CD4-positive, alpha-beta memory T cell (primary cell): ENCODE measurements at regions of chr1 and their contacts with region 1.

Region 1: GRCh38 chr1:100443811-100444571 is 91.7 kb downstream of the CDC14A start:
- DNase-seq: peak; percentile 52 to 69 (median 61)
- H3K4me3 ChIP-seq: peak overlapping the region; percentile 8 to 26
- H3K4me3 Mint-ChIP-seq: peak overlapping the region; percentile 74 to 91 (median 80)
- H3K27ac ChIP-seq: peak overlapping the region; percentile 96
- H3K27ac Mint-ChIP-seq: peak overlapping the region; percentile 98 to 100 (median 99)
- H3K4me1 ChIP-seq: peaks cover 99% of the 10 kb centered on the region
- H3K4me1 Mint-ChIP-seq: peaks cover 65 to 93% (median 75%) of the 10 kb centered on the region in 4 donors
- H3K27me3 ChIP-seq: no peaks in the 10 kb centered on the region
- H3K27me3 Mint-ChIP-seq: no peaks in the 10 kb centered on the region

Region 2: GRCh38 chr1:100430325-100430813 is 13.6 kb before region 1 on chr1:
- CTCF ChIA-PET with region 1: interaction called, 22 read pairs
- POLR2A ChIA-PET with region 1: interaction called, 272 read pairs
- intact Hi-C with region 1: no loop called
- DNase-seq: no peak
- H3K4me3 ChIP-seq: no peak overlapping the region
- H3K4me3 Mint-ChIP-seq: peak overlapping the region in 3 of 8 donors; percentile 3 to 26 (median 13)
- H3K27ac ChIP-seq: no peak overlapping the region
- H3K27ac Mint-ChIP-seq: peak overlapping the region in 6 of 7 donors; percentile 35 to 76 (median 59)
- H3K4me1 ChIP-seq: peaks cover 78% of the 10 kb centered on the region
- H3K4me1 Mint-ChIP-seq: peaks cover 50 to 76% (median 64%) of the 10 kb centered on the region in 4 donors
- H3K27me3 ChIP-seq: no peaks in the 10 kb centered on the region
- H3K27me3 Mint-ChIP-seq: no peaks in the 10 kb centered on the region

Region 3: DNA sequence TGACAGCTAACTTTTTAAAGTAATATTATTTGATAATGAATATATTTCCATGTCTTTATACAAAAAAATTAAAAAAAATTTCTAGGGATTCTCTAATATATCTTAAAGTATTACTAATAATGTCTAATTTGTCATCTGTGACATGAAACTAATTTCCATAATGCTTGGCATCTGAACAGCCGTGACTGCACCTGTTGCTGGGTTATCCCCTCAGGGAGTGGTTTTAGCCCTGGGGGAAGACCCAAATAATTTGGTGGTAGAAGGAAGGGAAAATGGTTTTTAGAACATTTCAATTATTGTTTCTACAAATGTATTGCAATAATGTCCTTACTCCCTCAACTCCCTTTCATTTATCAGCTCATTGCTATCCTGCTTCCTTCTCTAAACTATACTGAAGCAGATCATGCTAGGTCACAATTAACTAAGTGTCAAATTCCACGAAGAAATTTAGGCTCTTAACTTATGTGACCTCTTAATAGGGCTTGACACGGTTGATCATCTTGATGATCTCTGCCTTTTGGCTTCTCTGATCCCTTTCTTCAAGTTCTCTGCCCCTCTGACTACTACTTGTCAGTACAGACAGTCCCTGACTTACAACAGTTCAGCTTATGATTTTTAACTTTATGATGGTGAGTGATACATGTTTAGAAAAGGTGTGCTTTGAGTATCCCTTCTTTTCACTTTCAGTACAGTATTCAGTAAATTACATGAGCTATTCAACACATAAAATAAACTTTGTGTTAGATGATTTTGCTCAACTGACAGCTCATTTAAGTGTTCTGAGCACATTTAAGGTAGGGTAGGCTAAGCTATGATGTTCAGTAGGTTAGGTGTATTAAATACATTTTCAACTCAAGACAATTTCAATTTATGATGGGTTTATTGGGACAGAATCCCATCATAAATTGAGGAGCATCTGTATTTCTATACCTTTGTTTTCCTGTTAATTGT is 608.0 kb after region 1 on chr1:
- CTCF ChIA-PET with region 1: no interaction called
- POLR2A ChIA-PET with region 1: no interaction called
- intact Hi-C with region 1: no loop called
- DNase-seq: no peak
- H3K4me3 ChIP-seq: no peak overlapping the region
- H3K4me3 Mint-ChIP-seq: no peak overlapping the region
- H3K27ac ChIP-seq: no peak overlapping the region
- H3K27ac Mint-ChIP-seq: peak overlapping the region in 4 of 7 donors; percentile 29 to 63 (median 48)
- H3K4me1 ChIP-seq: no peaks in the 10 kb centered on the region
- H3K4me1 Mint-ChIP-seq: peaks cover 12 to 21% (median 18%) of the 10 kb centered on the region in 4 donors
- H3K27me3 ChIP-seq: no peaks in the 10 kb centered on the region
- H3K27me3 Mint-ChIP-seq: no peaks in the 10 kb centered on the region